Activated CD4-positive, alpha-beta memory T cell treated with anti-CD3 and anti-CD28 coated beads for 36 hours (primary cell): ENCODE measurements at regions of chr5 and their contacts with region 1.

Region 1: DNA sequence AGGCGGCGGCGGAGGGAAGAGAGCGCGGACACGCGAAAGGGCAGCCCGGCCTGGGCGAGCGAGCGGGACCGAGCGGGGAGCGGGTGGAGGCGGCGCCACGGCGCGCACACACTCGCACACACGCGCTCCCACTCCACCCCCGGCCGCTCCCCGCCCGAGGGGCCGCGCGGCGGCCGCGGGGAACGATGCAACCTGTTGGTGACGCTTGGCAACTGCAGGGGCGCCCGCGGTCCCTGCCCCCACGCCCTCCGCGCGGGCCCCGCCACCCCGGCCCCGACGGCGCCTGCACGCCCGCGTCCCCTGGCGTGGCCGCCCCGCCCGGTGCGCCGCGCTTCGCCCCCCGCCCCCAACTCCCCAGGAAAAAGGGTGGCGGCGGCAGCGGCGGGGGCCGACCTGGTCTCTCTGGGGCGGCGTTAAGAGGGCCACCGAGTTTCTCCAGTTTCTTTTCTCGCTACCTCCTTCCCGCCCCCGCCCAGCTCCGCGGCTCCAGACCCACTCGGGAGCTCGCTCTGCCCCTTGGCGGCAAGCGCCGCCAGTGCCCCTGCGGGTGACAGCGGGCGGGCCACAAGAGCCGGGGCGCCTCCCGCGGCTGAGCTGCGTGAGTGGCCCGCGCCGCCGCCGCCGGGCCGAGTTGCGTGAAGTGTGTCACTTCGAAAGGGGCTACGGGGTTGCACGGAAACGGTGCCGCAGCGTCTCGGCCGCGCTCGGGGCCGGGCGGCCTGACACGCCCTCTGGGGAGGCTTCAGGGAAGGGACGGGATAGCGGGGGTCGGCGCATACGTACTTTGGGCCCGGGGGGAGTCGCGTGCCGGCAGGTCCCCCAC is at the start of gene NR3C1:
- DNase-seq: peak; percentile 87
- H3K4me3 Mint-ChIP-seq: peak within 1 kb of the TSS; percentile 89
- H3K27ac Mint-ChIP-seq: peak within 1 kb of the TSS; percentile 100
- H3K4me1 Mint-ChIP-seq: peaks cover 47% of the 10 kb centered on the region
- H3K27me3 Mint-ChIP-seq: no peaks in the 10 kb centered on the region
- total RNA-seq, gene NR3C1: 48.6 to 53.9 TPM

Region 2: DNA sequence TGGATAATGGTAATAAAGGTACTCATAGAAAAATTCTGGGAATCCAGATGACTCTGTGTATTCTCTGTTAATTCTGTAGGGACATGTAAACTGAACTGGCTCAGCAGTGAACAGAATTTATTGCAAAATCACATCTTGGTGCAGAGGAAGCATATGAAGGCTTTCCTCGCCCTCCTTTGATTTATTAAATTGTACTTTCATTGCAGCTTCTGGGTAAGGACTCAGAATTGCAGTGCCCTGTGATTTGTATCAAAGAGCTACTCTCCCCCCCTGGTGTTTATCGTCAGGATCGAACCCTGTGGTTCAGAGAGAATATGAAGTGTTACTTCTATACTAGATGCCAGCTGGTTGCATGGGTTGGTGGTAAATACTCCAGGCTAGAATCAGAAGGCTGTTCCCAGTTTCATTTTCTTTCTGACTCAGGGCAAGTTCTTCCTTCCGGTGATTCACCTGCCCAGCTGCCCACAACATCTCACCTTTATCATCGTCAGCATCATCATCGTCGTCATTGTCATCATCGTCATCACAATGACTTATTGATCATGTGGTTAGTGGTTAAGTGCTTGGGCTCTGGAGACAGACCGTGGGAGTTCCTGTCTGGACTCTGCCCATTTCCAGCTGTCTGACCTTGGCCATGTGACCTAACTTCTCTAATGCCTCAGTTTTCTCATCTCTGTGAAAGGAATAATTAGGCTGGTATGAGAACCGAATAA is 394.8 kb before region 1 on chr5:
- CTCF ChIA-PET with region 1: interaction called, 37 read pairs
- POLR2A ChIA-PET with region 1: no interaction called
- intact Hi-C with region 1: loop called (anchors 1 kb)
- DNase-seq: peak; percentile 90
- H3K4me3 Mint-ChIP-seq: peak overlapping the region; percentile 31
- H3K27ac Mint-ChIP-seq: peak overlapping the region; percentile 73
- H3K4me1 Mint-ChIP-seq: peaks cover 69% of the 10 kb centered on the region
- H3K27me3 Mint-ChIP-seq: no peaks in the 10 kb centered on the region

Region 3: GRCh38 chr5:143101121-143101520 is 302.7 kb before region 1 on chr5:
- CTCF ChIA-PET with region 1: interaction called, 7 read pairs
- POLR2A ChIA-PET with region 1: interaction called, 3 read pairs
- intact Hi-C with region 1: loop called (anchors 2 kb)
- DNase-seq: peak; percentile 23
- H3K4me3 Mint-ChIP-seq: no peak overlapping the region
- H3K27ac Mint-ChIP-seq: peak overlapping the region; percentile 90
- H3K4me1 Mint-ChIP-seq: peaks cover 40% of the 10 kb centered on the region
- H3K27me3 Mint-ChIP-seq: no peaks in the 10 kb centered on the region

Region 4: GRCh38 chr5:143213851-143214363 is 189.9 kb before region 1 on chr5:
- CTCF ChIA-PET with region 1: interaction called, 7 read pairs
- POLR2A ChIA-PET with region 1: interaction called, 5 read pairs
- intact Hi-C with region 1: loop called (anchors 2 kb)
- DNase-seq: peak; percentile 63
- H3K4me3 Mint-ChIP-seq: no peak overlapping the region
- H3K27ac Mint-ChIP-seq: peak overlapping the region; percentile 79
- H3K4me1 Mint-ChIP-seq: peaks cover 57% of the 10 kb centered on the region
- H3K27me3 Mint-ChIP-seq: no peaks in the 10 kb centered on the region

Region 5: DNA sequence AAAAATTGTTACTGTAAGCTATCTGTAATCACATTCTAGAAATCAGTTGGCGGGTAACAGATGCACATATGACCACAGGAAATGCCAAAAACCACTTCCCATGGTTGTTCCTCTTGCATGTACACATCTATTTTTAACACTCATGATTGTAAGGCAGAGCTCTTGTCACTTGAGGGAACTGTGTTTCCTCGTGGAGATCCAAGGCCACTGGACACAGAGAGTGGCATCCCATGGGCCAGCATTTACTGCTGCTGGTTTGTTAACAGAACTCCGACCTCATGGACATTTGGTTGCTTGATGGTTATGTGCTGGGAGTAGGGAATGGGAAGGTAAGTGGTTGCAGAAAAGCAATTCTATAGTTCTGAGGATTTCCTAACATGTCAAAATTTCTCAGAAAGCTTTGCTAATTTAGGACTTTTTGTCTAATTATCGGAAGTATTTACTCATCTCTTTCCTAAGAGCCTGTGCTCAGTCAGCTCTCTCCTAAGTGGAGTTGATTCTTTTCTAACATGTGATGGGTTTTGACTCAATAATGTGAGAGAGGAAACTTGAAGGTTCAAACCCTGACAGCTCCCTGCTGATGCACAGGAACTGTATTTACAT is 201.7 kb after region 1 on chr5:
- CTCF ChIA-PET with region 1: interaction called, 9 read pairs
- POLR2A ChIA-PET with region 1: interaction called, 13 read pairs
- intact Hi-C with region 1: loop called (anchors 1 kb)
- DNase-seq: peak; percentile 52
- H3K4me3 Mint-ChIP-seq: peak overlapping the region; percentile 28
- H3K27ac Mint-ChIP-seq: peak overlapping the region; percentile 86
- H3K4me1 Mint-ChIP-seq: peaks cover 34% of the 10 kb centered on the region
- H3K27me3 Mint-ChIP-seq: peaks cover 3% of the 10 kb centered on the region

Region 6: DNA sequence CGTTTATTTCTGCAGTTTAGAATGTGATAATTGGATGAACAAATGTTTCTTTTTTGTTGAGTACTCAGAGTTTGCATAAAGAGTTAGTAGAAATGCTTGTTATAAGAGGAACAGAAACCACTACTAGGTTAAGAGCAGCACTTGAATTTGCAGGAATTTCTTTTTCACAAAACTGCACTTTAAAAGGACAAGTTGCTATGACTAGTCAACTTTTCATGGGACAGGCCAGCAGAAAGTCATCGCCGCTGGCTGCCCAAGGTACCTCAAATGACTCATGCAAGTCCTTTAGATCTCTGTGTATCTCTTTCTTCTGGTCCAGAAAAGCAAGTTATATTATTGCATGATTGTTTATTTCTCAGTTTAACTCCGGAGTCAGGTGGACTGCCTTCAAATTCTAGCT is 310.8 kb after region 1 on chr5:
- CTCF ChIA-PET with region 1: no interaction called
- POLR2A ChIA-PET with region 1: no interaction called
- intact Hi-C with region 1: no loop called
- DNase-seq: no peak
- H3K4me3 Mint-ChIP-seq: no peak overlapping the region
- H3K27ac Mint-ChIP-seq: no peak overlapping the region
- H3K4me1 Mint-ChIP-seq: no peaks in the 10 kb centered on the region
- H3K27me3 Mint-ChIP-seq: no peaks in the 10 kb centered on the region

Region 7: DNA sequence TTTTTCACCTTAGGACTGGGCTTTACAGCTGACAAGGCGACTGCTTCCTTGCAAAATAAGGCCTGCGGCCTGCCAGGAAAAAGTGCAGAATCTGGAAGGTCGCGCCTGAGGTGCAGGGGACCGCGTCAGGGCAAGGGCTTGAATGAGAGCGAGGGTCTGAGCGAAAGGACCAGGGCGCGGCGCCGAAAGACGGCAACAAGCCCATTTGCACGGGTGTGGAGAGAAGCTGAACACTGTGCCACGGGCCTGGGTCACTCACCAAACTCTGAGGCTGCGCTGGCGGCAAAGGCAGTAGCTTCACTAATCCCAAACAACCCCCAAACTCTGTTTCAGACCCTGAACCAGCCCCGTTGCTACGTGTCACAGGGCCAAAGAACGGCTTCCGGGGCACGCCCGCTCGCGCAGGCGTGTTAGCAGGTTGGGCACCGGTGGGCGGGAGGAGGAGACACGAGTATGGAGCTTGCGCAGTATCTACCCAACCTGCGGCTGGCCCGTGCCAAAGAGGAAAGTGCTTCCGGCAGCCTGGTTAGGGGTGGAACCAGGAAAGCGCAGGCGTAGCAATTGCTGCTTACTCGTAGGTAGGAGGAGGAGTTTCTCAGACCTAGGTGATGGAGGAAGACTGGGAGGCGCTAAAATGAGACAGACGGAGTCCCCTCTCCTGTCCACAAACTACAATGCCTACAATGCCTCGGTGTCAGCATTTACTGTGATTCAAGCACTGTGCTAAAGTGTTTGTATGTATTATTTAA is 766.6 kb after region 1 on chr5 and contains the starts of genes KCTD16 and YIPF5:
- CTCF ChIA-PET with region 1: no interaction called
- POLR2A ChIA-PET with region 1: no interaction called
- intact Hi-C with region 1: loop called (anchors 1 kb)
- DNase-seq: peak; percentile 99
- H3K4me3 Mint-ChIP-seq: peak within 1 kb of the TSS; percentile 99
- H3K27ac Mint-ChIP-seq: peak within 1 kb of the TSS; percentile 93
- H3K4me1 Mint-ChIP-seq: peaks cover 49% of the 10 kb centered on the region
- H3K27me3 Mint-ChIP-seq: no peaks in the 10 kb centered on the region
- total RNA-seq, gene KCTD16: 0.24 to 0.27 TPM
- total RNA-seq, gene YIPF5: 41.4 to 42.1 TPM